PC-9 (cell line): ENCODE measurements at regions of chr6 and their contacts with region 1.

Region 1: DNA sequence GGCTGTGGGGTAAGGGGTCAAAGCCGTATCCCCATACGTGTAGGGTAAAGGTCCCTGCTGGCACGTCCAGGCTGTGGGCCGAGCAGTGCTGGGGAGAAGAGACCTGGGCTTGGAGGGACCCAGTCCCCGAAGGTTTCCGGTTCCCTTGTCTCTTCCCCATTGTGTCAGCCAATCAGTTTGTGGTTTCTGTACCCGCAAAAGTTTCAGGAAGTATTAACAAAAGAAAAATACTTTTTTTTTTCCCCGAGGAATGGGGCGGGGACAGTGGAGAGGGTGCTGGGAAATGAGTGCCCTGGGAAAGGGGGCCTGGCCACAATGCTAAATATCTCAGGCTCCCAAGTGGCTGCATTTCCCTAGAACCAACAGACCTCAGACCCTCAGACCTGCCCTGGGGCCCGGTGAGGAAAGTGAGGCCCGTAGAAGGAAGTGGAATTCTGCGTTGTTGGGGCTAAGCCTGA is 15.2 kb upstream of the AMD1 start:
- DNase-seq: peak in 1 of 2 experiments; percentile 5
- H3K4me3 ChIP-seq: no peak overlapping the region
- H3K27ac ChIP-seq: no peak overlapping the region
- H3K4me1 ChIP-seq: peaks cover 5% of the 10 kb centered on the region
- H3K27me3 ChIP-seq: no peaks in the 10 kb centered on the region
- CTCF ChIP-seq: no peak

Region 2: DNA sequence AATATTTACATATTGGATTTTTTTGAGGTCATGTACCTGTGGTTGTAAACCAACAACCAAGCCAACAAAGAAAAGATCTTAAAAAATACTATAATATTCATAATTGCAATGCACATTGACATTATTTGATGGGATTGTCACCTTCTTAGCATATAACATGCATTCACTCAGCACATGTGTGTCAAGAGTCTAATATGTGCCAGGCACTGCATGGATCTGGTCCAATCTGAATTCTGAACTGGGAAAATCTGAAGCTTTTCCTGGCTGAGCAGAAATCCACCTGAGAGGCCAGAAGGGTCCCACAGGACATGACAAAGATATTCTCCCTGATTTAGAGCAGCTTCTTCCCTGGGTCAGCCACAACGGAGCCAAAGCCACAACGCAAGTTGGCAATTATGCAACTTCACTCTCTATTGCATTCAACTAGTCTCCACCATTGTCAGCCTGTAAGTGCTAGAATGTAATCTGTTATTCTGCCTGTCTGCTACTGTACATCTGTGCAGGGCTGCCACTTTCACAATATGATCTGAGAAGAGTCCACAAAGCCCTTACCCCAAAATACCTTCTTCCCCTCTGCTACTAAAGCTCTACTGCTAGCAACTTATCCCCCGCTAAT is 427.0 kb before region 1 on chr6:
- CTCF ChIA-PET with region 1: no interaction called
- POLR2A ChIA-PET with region 1: no interaction called
- intact Hi-C with region 1: no loop called
- DNase-seq: no peak
- H3K4me3 ChIP-seq: no peak overlapping the region
- H3K27ac ChIP-seq: no peak overlapping the region
- H3K4me1 ChIP-seq: no peaks in the 10 kb centered on the region
- H3K27me3 ChIP-seq: peaks cover 55% of the 10 kb centered on the region
- CTCF ChIP-seq: no peak

Region 3: DNA sequence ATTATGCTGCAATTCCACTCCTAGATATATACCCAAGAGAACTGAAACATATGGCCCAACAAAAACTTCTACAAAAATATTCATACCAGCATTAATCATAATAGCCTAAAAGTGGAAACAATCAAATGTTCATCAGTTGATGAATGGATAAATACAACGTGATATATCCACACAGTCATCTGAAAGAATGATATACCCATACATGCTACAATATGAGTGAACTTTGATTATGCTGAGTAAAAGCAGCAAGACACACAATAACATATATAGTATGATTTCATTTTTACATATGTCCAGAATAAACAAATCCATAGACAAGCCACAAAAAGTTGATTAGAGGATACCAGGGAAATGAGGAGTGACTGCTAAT is 74.8 kb before region 1 on chr6:
- CTCF ChIA-PET with region 1: no interaction called
- POLR2A ChIA-PET with region 1: interaction called, 11 read pairs
- intact Hi-C with region 1: no loop called
- DNase-seq: no peak
- H3K4me3 ChIP-seq: no peak overlapping the region
- H3K27ac ChIP-seq: no peak overlapping the region
- H3K4me1 ChIP-seq: no peaks in the 10 kb centered on the region
- H3K27me3 ChIP-seq: no peaks in the 10 kb centered on the region
- CTCF ChIP-seq: no peak